Left ventricle myocardium inferior (tissue), 1 donor: ENCODE measurements at regions of chrX and their contacts with region 1.

Region 1: GRCh38 chrX:30141966-30142365 is 73.4 kb upstream of the MAGEB2 start:
- DNase-seq: no peak
- H3K4me3 ChIP-seq: no peak overlapping the region
- H3K27ac ChIP-seq: no peak overlapping the region
- H3K4me1 ChIP-seq: no peaks in the 10 kb centered on the region
- H3K27me3 ChIP-seq: no peaks in the 10 kb centered on the region
- CTCF ChIP-seq: peak; percentile 33

Region 2: GRCh38 chrX:30253257-30253656 is 111.3 kb after region 1 on chrX:
- intact Hi-C with region 1: loop called (anchors 5 kb)
- DNase-seq: no peak
- H3K4me3 ChIP-seq: no peak overlapping the region
- H3K27ac ChIP-seq: no peak overlapping the region
- H3K4me1 ChIP-seq: no peaks in the 10 kb centered on the region
- H3K27me3 ChIP-seq: no peaks in the 10 kb centered on the region
- CTCF ChIP-seq: no peak